Activated CD4-positive, alpha-beta T cell treated with anti-CD3 and anti-CD28 coated beads, Interleukin-2, amount 10 ng/mL, durations not matched to agents 24 days and 14 days (primary cell): ENCODE measurements at regions of chr14 and their contacts with region 1.

Region 1: DNA sequence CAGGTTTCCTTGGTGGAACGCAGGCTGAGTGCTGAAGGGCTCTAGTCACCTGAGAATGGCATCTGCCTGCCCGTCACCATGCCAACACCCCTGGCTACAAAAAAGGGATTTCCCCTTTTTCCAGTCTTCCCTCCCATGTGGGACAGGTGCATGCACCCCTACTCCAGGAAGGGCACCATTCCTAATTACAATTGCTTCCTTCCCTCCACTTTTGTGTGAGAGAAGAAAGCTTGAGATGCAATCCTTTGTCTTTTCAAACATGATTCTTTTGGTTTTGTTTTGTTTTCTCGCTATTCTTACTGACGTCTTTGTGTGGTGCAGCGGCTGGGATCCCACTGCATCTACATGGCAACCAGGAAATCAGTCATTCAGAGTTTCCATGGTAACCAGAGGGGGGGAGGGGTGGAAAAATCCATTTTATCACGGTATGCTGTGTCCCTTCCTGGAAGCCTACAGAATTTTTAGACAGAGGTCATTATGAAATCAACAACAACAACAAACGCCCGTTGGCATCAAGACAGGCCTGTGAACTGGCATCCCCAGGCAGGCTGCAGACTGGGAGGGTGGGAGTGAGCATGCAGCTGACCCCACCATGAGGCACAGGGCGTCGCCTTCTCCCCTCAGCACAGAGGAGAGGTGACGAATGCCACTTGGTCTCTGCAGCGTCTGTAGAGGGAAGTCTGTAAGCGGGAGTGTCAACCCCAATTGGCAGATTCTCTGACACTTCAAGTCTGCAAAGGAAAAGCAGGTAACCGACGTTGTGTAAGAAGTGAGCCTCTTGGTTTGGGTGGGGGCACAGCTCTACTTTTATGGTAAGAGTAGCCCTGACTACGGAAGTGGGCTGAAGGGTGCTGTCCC is 13.6 kb upstream of the GNG2 start:
- DNase-seq: peak; percentile 97
- H3K4me3 Mint-ChIP-seq: peak overlapping the region; percentile 89
- H3K27ac Mint-ChIP-seq: peak overlapping the region; percentile 99
- H3K4me1 Mint-ChIP-seq: peaks cover 65% of the 10 kb centered on the region
- H3K27me3 Mint-ChIP-seq: peaks cover 2% of the 10 kb centered on the region

Region 2: DNA sequence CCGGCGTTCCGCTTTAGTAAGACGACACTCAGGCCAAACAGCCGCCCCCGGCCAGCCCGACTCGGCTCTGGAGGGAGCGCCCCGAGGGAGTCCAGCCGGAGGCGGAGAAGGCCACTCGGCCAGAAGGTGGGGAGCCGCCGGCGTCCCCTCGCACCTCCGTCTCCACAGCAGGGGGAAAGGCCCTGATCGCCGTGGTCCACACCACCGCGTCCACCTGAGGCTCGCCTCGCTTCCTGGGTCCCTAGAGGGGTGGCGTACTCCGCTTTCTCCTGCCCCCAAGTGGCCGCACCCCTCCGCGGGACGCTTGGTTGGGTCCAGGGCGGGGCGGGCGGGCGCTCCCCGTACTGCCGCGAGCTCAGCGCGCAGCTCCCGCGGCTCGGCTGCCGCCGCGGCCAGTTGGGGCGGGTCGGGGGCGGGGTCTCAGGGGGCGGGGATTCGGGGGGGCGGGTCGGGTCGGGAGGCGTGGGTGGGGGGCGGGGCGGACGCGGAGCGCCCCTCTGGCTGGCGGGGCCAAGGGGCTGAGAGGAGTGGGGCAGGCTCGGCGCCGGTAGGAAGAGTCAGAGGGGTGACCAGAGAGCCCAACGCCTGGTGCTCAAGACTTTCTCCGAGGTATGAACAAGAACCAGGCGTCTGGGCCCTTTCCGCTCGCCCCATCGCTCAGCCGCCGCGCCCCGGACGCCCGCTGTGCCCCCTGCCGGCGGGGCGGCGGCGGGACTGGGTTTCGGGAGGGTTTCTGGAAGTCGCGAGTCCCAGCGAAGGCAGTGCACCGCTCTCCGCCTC is 195.3 kb before region 1 on chr14 and contains the start of gene FRMD6:
- intact Hi-C with region 1: loop called (anchors 2 kb)
- DNase-seq: peak; percentile 94
- H3K4me3 Mint-ChIP-seq: peak within 1 kb of the TSS; percentile 88
- H3K27ac Mint-ChIP-seq: peak within 1 kb of the TSS; percentile 78
- H3K4me1 Mint-ChIP-seq: peaks cover 19% of the 10 kb centered on the region
- H3K27me3 Mint-ChIP-seq: peaks cover 17% of the 10 kb centered on the region
- total RNA-seq, gene FRMD6: 5.5 and 7.4 TPM in 2 replicates

Region 3: GRCh38 chr14:51860164-51860824 is 13.4 kb after region 1 on chr14 and contains the start of gene GNG2:
- intact Hi-C with region 1: loop called (anchors 1 kb)
- DNase-seq: peak; percentile 95
- H3K4me3 Mint-ChIP-seq: peak within 1 kb of the TSS; percentile 99
- H3K27ac Mint-ChIP-seq: peak within 1 kb of the TSS; percentile 92
- H3K4me1 Mint-ChIP-seq: peaks cover 51% of the 10 kb centered on the region
- H3K27me3 Mint-ChIP-seq: no peaks in the 10 kb centered on the region
- total RNA-seq, gene GNG2: 104 and 105 TPM in 2 replicates

Region 4: GRCh38 chr14:51901475-51902024 is 54.7 kb after region 1 on chr14:
- intact Hi-C with region 1: loop called (anchors 1 kb)
- DNase-seq: peak; percentile 53
- H3K4me3 Mint-ChIP-seq: no peak overlapping the region
- H3K27ac Mint-ChIP-seq: no peak overlapping the region
- H3K4me1 Mint-ChIP-seq: peaks cover 31% of the 10 kb centered on the region
- H3K27me3 Mint-ChIP-seq: no peaks in the 10 kb centered on the region

Region 5: DNA sequence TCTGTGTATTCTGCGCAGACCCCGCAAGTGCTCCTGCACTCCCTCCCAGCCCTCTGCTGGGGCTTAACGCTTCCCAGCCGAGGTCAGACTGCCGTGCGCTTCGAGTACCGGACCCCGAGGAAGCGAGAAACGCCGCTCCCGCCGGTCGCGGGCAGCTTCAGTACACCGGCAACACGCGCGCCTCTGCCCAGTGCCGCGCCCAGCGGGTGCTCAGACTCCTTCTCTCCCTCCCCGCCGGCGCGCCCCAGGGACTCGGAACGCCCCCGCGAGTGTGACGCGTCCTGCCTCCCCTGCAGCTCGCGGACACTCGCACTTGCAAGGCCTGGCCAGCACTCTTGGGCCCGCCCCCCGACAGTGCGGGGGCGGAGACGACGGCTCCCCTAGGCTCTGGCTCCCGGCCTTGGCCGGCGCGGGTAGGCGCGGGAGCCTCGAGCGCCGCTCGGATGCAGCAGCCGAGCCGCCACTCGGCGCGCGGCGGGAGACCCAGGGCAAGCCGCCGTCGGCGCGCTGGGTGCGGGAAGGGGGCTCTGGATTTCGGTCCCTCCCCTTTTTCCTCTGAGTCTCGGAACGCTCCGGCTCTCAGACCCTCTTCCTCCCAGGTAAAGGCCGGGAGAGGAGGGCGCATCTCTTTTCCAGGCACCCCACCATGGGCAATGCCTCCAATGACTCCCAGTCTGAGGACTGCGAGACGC is 467.2 kb after region 1 on chr14 and contains the start of gene PTGER2:
- intact Hi-C with region 1: loop called (anchors 5 kb)
- DNase-seq: peak; percentile 97
- H3K4me3 Mint-ChIP-seq: peak within 1 kb of the TSS; percentile 99
- H3K27ac Mint-ChIP-seq: peak within 1 kb of the TSS; percentile 99
- H3K4me1 Mint-ChIP-seq: peaks cover 62% of the 10 kb centered on the region
- H3K27me3 Mint-ChIP-seq: no peaks in the 10 kb centered on the region
- total RNA-seq, gene PTGER2: 66.7 and 69.9 TPM in 2 replicates

Region 6: DNA sequence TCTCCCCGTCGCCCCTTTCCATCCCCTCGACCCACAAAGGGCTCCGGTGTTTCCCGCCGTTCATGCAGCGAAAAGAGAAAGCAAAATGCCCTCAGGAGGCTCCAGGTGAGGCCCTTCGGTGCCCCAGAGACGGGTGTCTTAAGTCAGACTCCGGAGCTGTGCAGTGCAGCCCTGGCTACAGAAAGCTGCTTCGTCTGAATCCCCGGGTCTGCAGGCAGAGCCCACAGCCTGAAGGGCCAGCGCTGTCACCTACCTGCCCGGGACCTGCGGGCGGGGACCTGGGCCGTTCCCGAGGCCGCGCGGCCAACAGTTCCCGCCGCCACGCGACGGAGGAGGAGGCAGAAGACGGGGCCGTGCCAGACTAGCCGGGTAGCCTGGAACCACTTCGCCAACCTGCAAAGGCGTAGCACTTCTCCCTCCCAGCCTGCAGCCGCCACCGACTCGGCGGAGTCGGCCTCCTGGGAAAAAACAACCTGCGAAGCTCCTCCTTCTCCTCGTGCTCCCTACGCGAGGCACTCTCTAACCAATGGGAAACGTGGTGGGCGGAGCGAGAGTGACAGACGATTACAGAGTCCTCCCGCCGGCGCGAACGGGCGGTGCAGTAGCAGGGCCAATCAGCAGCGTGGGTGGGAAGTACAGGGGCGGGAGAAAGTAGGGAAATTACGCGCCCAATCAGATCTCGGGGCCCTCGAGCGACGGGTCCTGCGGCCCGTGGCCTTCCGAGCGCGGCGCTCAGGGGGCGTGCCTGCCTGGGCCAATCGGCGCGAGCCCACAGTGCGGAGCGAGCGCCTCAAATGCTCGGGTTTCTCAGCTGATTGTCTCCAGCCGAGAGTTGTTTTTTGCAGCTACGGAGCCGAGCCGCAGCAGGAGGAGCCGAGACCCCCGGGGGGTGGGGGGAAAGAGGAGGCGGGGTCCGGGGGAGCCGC is 705.5 kb after region 1 on chr14 and contains the starts of genes GPR137C and TXNDC16:
- intact Hi-C with region 1: loop called (anchors 5 kb)
- DNase-seq: peak; percentile 100
- H3K4me3 Mint-ChIP-seq: peak within 1 kb of the TSS; percentile 93
- H3K27ac Mint-ChIP-seq: peak within 1 kb of the TSS; percentile 77
- H3K4me1 Mint-ChIP-seq: peaks cover 29% of the 10 kb centered on the region
- H3K27me3 Mint-ChIP-seq: peaks cover 29% of the 10 kb centered on the region
- total RNA-seq, gene GPR137C: 0.07 and 0.24 TPM in 2 replicates
- total RNA-seq, gene TXNDC16: 4.7 and 6.2 TPM in 2 replicates